GM23248 (cell line): ENCODE measurements at regions of chr4 and their contacts with region 1.

Region 1: GRCh38 chr4:121736735-121737351 is 28.1 kb downstream of the SMIM43 start:
- DNase-seq: peak; percentile 77
- H3K4me3 ChIP-seq: no peak overlapping the region
- H3K27ac ChIP-seq: no peak overlapping the region
- H3K4me1 ChIP-seq: peaks cover 3% of the 10 kb centered on the region; the same call in 1 of the 2 replicates
- H3K27me3 ChIP-seq: no peaks in the 10 kb centered on the region

Region 2: DNA sequence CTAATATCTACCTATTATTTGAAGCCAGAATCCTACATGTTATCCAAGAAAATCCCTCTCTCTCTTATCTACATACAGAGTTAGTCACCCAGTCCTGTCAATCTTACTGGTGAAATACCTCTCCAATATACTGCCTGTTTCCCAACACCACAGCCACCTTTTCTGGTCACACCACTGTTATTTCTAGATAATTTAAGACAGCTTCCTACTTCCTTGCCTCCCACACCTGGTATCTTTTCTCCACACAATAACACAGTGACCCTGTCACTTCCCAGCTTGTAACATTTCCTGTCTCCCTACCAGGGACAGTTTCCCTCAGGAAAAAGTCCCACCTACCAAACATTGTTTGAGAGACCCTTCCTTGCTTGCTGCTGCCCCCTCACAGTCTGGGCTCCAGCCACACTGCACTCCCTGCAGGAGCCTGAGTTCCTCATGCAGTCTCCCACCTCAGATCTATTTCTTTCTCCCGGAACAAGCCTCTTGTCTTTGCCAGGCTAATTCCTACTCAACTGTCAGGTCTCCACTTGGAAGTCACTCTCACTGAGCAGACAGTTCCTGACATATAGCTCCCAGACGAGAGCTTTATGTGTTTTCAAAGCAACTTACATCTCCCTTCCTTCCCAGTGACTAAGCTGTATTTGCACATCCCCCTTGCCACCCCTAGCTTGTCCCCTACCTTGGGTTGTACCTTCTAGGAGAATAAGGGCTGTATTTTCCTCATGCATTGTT is 282.4 kb before region 1 on chr4:
- in situ Hi-C with region 1: loop called (anchors 10 kb)
- DNase-seq: no peak
- H3K4me3 ChIP-seq: no peak overlapping the region
- H3K27ac ChIP-seq: no peak overlapping the region
- H3K4me1 ChIP-seq: no peaks in the 10 kb centered on the region
- H3K27me3 ChIP-seq: peaks cover 66% of the 10 kb centered on the region

Region 3: DNA sequence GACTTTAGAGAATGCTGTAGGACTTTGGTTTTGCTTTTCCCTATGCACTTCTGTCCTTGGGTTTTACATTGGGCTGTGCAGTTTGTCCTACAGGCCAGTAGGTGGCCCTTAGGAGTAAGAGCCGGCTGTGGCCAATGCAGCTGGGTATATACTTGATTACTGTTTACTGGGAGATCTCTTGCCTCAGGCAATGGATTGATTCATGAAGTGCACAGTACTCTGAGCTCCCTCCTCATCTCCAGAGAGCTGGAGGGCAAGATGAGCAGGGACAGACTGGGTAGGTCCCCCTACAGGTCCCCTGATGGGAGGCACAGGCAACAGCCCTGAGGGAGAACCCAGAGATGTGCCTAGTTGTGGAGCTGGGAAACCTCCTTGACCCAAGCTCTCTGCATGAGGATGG is 252.2 kb before region 1 on chr4:
- in situ Hi-C with region 1: loop called (anchors 10 kb)
- DNase-seq: peak; percentile 82
- H3K4me3 ChIP-seq: no peak overlapping the region
- H3K27ac ChIP-seq: no peak overlapping the region
- H3K4me1 ChIP-seq: no peaks in the 10 kb centered on the region
- H3K27me3 ChIP-seq: 0 out of 2 replicates have a peak, but pooled peaks cover 3% of the 10 kb centered on the region

Region 4: DNA sequence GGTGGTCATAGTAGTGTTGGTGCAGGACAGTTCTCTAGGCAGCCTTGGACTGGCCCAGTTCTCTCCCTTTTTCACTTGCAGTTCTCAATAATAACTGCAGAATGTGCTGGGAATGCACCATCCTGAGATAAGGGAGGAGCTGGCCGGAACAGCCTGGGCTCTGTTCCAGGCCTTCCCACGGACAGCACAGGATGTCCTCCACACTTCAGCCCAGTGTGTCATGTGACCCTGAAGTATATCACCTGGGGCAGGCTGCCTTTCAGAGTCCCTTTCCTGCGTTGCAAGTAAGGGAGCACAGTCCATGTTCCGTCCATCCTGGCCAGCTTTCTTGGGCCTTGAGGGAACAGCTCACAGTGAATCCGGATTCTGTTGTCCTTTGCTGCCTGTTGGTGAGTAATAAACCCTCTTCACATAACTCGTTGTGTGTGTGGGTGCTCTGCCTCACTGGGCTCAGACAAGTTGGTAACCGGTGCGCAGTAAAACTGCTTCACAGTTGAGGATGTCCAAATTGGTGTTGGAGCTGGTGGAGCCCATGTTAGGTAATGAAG is 963.4 kb after region 1 on chr4:
- in situ Hi-C with region 1: no loop called
- DNase-seq: peak; percentile 40
- H3K4me3 ChIP-seq: no peak overlapping the region
- H3K27ac ChIP-seq: no peak overlapping the region
- H3K4me1 ChIP-seq: peaks cover 12% of the 10 kb centered on the region
- H3K27me3 ChIP-seq: no peaks in the 10 kb centered on the region